Right ventricle myocardium inferior (tissue), 1 donor: ENCODE measurements at regions of chrX and their contacts with region 1.

Region 1: DNA sequence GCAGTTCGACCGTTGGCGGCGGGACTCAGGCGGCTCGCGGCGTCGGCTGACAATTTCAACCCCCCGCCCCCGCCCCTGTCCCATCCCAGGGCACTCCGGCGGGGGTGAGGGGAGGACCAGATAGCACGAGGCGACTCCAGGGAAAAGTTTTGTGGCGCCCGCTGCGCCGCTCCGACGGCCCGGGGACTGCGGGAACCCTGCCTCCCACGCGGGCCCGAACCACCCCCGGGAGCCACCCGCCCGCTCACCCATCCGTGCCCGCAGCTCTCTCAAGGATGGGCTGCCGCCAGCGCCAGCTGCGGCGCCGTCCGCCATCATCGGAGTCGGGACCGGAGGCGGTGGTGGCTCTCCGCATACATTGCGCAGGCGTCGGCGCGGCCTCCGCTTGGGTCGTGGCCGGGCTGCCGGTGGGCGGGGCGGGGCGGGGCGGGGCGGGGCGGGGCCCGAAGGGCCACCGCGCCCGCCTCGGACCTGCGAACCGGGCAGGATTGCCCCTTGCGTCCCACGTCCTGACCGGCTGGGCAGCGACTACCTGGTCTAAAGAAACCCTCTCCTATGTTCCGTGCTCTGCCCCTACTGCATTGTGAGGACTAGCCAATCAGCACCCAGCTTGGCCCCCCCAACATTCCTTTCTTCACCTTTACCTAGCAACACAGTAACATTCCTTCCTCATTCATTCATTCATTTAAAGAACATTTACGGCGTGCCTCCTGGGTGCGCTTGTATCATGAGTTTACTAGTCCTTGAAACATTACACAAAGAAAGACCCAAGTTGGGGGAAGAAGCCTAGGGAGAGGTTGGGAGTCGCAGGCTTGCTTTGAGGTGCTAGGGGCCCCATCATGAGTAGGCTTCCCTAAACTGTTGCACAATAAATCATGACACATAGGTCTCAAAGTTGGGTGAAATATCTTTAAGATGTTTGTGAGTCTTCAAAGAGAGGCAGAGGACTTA is at the start of gene MAP7D3:
- DNase-seq: peak; percentile 85
- ATAC-seq: peak; percentile 92
- total RNA-seq, gene MAP7D3: 13.5 TPM

Region 2: GRCh38 chrX:136130931-136131833 is 120.1 kb before region 1 on chrX:
- intact Hi-C with region 1: no loop called
- DNase-seq: no peak
- ATAC-seq: no peak

Region 3: GRCh38 chrX:136215559-136215958 is 35.8 kb before region 1 on chrX:
- intact Hi-C with region 1: loop called (anchors 5 kb)
- DNase-seq: no peak
- ATAC-seq: no peak

Region 4: DNA sequence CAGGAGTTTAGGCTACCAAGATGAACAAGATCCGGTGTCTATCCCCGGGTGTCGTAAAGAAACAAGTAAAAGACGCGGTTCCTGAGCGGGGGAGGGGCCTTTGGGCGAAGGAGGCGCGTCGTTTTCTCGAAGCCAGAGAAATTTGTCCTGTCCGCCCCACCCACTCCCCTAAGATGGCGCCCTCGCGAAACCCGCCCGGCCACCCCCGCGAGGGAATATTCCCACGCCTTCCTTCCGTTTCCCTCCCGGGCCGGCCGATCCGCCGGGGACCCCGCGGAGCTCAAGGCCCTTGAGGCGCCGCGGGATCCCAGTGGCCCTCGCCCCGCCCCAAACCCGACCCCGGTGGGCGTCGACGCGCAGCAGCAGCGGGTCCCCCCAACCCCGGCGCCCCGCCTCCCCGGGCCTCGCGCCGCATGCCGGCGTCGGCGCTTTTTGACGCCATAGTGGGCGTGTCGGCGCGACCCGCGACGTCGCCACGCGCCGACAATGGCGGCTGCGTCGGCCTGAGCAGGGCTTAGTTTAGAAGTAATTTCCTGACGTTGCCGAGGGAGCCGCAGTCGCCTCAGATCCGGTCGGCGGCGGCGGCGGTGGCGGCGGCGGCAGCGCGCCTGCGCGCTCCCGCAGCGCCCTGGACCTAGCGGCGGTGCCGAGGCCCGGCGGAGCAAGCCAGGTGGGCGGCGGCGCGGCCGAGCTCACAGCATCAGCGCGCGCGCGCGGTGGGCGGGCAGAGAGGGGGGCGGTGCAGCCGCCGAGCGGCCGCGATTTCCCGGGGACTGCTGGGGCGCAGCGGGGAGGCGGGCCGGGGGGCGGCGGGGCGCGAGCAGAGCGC is 245.7 kb after region 1 on chrX and contains the start of gene HTATSF1:
- intact Hi-C with region 1: loop called (anchors 10 kb)
- DNase-seq: peak; percentile 90
- ATAC-seq: peak; percentile 93
- total RNA-seq, gene HTATSF1: 57.3 TPM